ENCODE measurements at regions of chr5 and their contacts with region 1.

Region 1: DNA sequence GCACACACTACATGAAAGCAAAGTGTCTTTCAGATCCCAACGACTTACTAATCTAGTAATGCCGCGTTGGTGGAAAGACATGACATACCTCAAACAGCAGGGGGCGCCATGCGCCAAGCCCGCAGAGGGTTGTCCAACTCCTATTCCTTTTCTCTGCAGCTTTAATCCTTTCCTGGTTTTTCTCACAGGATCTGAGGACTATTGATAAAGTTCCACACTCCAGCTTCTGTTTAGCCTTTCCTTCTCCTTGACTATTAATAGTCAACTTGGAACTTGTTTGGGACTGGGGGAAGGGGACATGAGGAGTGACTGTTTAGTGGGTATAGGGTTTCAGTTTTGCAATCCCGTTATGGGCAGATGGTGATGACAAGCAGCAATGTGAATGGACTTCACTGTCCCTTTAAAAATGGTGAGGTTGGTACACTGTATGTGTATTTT is 62.9 kb downstream of the OTULIN start:
- DNase-seq: peak; percentile 79
- H3K4me3 ChIP-seq: no peak overlapping the region
- H3K27ac ChIP-seq: no peak overlapping the region
- H3K27me3 ChIP-seq: no peaks in the 10 kb centered on the region
- CTCF ChIP-seq: peak; percentile 95

Region 2: GRCh38 chr5:14298126-14298847 is 429.2 kb before region 1 on chr5:
- in situ Hi-C with region 1: no loop called
- DNase-seq: no peak
- H3K4me3 ChIP-seq: no peak overlapping the region
- H3K27ac ChIP-seq: no peak overlapping the region
- H3K27me3 ChIP-seq: no peaks in the 10 kb centered on the region
- CTCF ChIP-seq: no peak

Region 3: DNA sequence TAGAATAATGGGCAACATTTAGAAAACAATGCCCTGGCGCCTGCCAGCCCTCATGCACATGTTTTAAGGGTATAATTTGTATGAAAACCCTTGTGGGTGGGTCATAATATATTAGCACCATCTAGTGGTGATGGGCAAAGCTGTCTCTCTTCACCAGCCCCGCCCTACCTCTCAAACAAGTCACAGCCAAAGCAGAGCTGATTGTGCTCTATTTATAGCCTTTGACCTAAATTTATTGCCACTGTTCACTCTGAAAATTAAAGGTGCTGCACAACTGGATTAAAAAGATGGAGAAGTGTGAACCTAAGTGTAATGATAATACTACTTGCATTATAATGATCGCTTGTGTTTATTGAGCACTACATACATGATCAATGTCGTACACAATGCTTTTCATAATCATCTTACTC is 276.1 kb after region 1 on chr5:
- in situ Hi-C with region 1: loop called (anchors 25 kb)
- DNase-seq: peak; percentile 77
- H3K4me3 ChIP-seq: no peak overlapping the region
- H3K27ac ChIP-seq: no peak overlapping the region
- H3K27me3 ChIP-seq: no peaks in the 10 kb centered on the region
- CTCF ChIP-seq: peak; percentile 83